Mucosa of descending colon (tissue), 3 donors: ENCODE measurements at regions of chr6 and their contacts with region 1.

Region 1: GRCh38 chr6:30721198-30722024 is 1.3 kb downstream of the TUBB start:
- DNase-seq: peak; percentile 93 to 95 (median 94)
- ATAC-seq: peak; percentile 70
- H3K4me3 ChIP-seq: peak overlapping the region; percentile 92
- H3K4me1 ChIP-seq: peaks cover 28% of the 10 kb centered on the region
- CTCF ChIP-seq: peak; percentile 42

Region 2: DNA sequence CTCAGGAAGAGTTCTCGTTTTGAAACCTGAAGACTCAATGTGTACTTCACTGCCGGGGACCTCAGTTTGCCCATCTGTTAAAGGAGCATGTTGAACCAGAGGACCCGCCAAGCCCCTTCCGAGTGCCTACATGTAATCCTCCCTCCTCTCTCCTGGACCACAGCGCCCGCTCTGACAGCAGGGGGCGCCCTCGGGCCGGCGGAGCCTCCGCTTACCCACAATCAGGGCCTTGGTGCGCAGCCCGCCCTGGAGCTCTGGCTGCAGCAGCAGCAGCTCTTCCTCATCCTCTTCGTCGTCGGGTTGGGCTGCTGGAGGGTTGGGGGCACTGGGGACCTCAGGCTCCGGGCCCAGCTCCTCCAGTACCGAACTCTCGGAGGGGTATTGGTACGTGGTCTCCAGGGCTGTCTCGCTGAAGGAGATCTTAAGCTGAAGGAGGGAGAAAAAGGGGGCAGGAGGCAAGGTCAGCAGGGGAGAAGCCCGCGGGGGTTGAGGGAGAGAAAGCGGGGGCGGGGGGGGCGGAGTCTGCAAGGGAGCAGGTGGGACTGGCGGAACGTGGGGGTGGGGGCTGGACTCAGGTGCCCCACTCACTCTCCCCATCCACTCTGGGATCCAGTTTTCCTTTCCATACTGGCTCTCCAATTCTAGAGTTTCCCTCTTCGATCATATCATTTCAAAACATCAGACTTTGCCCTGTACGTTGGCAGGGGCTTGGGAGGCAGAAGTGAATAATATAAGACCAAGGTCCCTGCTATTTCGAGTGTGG is 42.3 kb before region 1 on chr6:
- intact Hi-C with region 1: loop called (anchors 2 kb)
- DNase-seq: peak; percentile 88 to 93 (median 93)
- ATAC-seq: peak; percentile 87
- H3K4me3 ChIP-seq: no peak overlapping the region
- H3K4me1 ChIP-seq: peaks cover 17% of the 10 kb centered on the region
- CTCF ChIP-seq: peak; percentile 93